ENCODE measurements at regions of chr5 and their contacts with region 1.

Region 1: DNA sequence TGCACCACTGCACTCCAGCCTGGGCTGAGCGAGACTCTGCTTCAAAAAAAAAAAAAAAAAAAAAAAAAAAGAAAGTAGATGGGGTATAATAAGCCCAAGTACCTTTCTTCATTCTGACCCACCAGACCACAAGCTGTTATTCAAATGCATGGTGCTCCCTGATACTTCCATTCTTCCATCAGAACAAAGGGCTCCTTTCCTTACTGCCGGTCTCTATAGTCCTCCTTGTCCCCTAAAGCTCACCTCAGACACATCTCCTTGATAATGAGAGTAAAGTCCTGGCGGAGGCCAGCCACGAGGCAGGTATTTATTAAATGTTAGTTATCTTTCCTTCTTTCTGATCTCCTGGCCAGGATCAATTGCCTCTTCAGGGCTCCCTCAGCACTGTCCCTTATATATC is 162.5 kb downstream of the RAB3C start:
- DNase-seq: no peak
- ATAC-seq: no peak
- H3K4me3 ChIP-seq: no peak overlapping the region
- H3K4me3 Mint-ChIP-seq: no peak overlapping the region
- H3K27ac ChIP-seq: no peak overlapping the region
- H3K27ac Mint-ChIP-seq: no peak overlapping the region
- H3K4me1 ChIP-seq: no peaks in the 10 kb centered on the region
- H3K4me1 Mint-ChIP-seq: no peaks in the 10 kb centered on the region
- H3K27me3 ChIP-seq: peaks cover 0 to 4% of the 10 kb centered on the region in 2 experiments
- H3K27me3 Mint-ChIP-seq: peaks cover 0 to 3% of the 10 kb centered on the region in 2 donors

Region 2: GRCh38 chr5:58786711-58787303 is 41.5 kb after region 1 on chr5:
- CTCF ChIA-PET with region 1: no interaction called
- POLR2A ChIA-PET with region 1: no interaction called
- DNase-seq: no peak
- ATAC-seq: no peak
- H3K4me3 ChIP-seq: no peak overlapping the region
- H3K4me3 Mint-ChIP-seq: no peak overlapping the region
- H3K27ac ChIP-seq: no peak overlapping the region
- H3K27ac Mint-ChIP-seq: no peak overlapping the region
- H3K4me1 ChIP-seq: no peaks in the 10 kb centered on the region
- H3K4me1 Mint-ChIP-seq: peaks cover 0 to 4% (median 2%) of the 10 kb centered on the region in 3 donors
- H3K27me3 ChIP-seq: peaks cover 0 to 10% of the 10 kb centered on the region in 2 experiments
- H3K27me3 Mint-ChIP-seq: peaks cover 8 to 22% of the 10 kb centered on the region in 2 donors

Region 3: DNA sequence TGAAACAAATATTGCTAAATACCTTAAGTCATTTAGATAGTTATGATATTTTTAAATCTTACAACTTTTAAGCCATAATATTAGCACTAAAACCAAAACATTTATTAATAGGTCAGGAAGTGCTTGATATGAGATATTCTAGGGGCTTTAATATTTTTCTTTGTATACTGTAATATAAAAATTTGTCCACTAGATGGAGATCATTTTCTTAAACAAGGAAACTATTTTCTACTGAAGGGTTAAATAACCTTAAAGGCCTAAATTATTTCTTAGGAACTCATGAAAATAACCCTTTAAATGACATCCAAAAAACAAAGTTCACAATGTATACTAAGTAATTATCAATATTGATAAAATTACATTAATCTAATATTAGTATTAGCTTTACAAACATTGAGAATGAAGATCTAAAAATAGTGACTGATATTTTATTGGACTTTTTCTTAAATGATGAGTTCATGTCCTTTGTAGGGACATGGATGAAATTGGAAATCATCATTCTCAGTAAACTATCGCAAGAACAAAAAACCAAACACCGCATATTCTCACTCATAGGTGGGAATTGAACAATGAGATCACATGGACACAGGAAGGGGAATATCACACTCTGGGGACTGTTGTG is 473.2 kb after region 1 on chr5:
- CTCF ChIA-PET with region 1: no interaction called
- POLR2A ChIA-PET with region 1: interaction called in 1 of 2 experiments, 12 read pairs
- DNase-seq: no peak
- ATAC-seq: no peak
- H3K4me3 ChIP-seq: no peak overlapping the region
- H3K4me3 Mint-ChIP-seq: no peak overlapping the region
- H3K27ac ChIP-seq: no peak overlapping the region
- H3K27ac Mint-ChIP-seq: no peak overlapping the region
- H3K4me1 ChIP-seq: no peaks in the 10 kb centered on the region
- H3K4me1 Mint-ChIP-seq: no peaks in the 10 kb centered on the region
- H3K27me3 ChIP-seq: no peaks in the 10 kb centered on the region
- H3K27me3 Mint-ChIP-seq: peaks cover 31% of the 10 kb centered on the region in 2 donors